ENCODE measurements at regions of chr4 and their contacts with region 1.

Region 1: GRCh38 chr4:184287697-184288255 is 70.1 kb upstream of the ENPP6 start:
- DNase-seq: no peak

Region 2: DNA sequence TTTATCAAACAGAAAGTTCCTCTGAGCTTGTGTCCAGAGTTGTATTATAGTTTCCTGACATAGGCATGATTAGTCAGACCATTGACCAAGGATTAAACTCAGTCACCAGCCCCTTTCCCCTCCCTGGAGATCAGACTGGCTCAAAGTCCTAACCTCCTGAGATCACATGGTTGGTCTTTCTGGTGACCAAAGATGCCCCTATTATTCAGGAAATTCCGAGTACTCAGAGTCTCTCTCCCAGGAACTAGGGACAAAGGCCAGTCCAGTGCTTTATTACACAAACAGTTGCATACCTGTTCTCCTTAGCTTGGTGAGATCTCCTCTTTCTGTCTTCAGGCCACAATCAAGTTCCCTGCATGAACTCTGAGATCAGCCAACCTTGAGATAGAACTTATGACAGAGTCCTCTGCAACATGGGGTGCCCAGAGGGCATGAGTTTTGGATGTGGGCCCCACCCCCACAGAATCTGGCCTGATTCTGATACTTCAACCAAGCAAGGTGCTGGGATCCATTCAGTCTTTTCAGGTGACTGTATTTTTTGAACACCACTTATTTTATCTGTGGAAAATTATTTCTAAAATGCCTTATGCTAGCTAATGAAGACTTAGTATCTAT is 55.5 kb before region 1 on chr4:
- intact Hi-C with region 1: no loop called
- DNase-seq: no peak

Region 3: DNA sequence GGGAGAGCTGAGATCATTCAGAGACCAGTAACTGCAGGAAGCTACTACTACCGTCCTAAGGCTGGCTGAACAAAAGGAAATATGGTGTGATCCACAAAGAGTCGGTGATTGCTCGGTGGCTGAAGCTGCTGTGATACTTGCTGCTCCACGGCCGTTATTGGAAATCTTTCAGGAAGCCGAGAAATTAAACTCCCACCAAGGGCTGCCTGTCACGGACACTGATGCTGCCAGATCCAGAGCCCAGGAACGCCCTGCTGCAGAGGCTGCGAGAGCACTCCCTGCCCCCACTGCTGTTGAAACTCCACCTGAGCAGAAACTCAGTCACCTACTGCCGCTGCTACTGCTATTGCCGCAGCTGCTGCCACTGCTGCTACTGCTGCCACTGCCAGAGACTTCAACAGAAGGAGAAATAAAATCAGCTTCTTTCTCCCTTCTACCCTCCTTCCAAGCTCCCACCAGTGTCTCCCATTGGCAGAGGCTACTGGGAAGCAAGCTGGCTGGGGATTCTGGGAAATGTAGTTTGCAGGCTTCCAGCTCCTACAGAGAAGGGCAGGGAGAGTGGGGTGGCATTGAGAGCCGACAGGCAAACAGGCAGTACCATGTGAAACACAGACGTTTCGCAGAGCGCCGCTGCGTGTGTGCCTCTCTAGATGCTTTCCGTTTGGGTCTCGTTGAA is 55.9 kb after region 1 on chr4:
- intact Hi-C with region 1: loop called (anchors 5 kb)
- DNase-seq: peak; percentile 60 to 96 (median 79)